AG04450 (cell line): ENCODE measurements at regions of chr4 and their contacts with region 1.

Region 1: GRCh38 chr4:85370430-85371032 is 104.4 kb upstream of the ARHGAP24 start:
- DNase-seq: no peak
- H3K4me3 ChIP-seq: no peak overlapping the region
- H3K27ac ChIP-seq: no peak overlapping the region
- H3K27me3 ChIP-seq: no peaks in the 10 kb centered on the region
- CTCF ChIP-seq: peak; percentile 75

Region 2: DNA sequence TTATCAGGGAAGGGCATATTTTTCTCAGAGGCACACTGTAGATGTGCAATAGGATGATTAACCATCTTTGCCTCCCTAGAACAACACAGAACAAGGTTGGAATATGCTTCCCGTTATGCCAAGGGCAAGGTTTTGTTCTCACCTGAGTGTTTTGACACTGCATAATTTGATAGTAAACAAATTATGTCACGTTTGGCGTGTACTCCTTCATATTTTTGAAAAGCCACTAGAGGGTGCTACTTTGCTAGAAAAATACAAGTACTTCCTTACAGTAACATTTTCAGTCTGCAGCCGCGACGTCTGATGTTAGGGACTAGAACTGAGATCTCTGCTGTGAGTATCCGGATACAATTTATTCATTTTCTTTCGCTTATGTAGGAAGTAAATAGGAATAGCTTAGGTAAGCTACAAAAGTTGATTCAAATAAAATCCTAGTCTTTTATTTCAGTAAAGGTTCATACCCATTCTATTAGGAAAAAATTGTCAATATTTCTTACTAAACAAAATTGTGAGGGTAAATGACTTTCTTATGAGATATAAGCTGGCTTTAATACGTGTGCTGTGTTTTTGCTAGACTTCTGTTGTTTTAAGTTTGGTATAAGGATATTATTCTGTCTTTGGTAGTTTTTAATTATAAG is 223.0 kb before region 1 on chr4:
- CTCF ChIA-PET with region 1: interaction called, 20 read pairs
- POLR2A ChIA-PET with region 1: no interaction called
- DNase-seq: peak; percentile 6
- H3K4me3 ChIP-seq: no peak overlapping the region
- H3K27ac ChIP-seq: no peak overlapping the region
- H3K27me3 ChIP-seq: no peaks in the 10 kb centered on the region
- CTCF ChIP-seq: peak; percentile 70